ENCODE measurements at regions of chr15 and their contacts with region 1.

Region 1: DNA sequence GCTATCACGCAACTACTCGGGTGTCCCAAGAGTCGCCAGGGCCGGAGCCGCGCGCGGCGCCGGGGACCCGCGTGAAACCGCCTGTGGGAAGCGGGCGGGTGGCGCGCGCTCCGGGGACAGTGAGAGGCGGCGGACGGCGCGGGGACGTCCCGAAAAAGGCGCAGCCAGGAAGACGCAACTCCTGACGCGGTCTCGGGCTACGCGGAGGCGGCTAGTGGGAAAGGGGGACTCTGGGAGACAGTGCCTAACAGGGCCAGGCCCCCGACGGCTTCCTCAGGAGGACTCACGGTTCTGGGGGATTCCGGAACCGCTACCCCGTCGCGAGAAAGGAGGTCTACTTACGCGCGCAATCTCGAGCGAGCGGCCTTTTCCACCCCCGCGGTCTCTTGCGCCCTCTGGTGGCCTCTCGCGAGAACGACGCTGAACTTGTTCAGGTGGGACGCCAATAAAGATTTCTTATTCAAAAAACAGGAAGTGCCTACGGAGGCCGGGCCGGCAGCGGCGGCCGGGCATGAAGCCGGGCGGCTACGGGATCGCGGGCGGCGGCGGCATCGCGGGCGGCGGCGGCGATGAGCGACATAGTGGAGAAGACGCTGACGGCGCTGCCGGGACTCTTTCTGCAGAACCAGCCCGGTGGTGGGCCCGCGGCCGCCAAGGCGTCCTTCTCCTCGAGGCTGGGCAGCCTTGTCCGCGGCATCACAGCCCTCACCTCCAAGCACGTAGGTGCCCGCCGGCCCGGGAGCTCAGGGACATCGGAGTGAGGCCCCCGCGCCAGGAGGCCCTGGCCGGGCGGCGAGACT is at the start of gene AP4E1:
- DNase-seq: peak; percentile 98
- H3K4me3 Mint-ChIP-seq: peak within 1 kb of the TSS; percentile 87
- H3K27ac Mint-ChIP-seq: peak within 1 kb of the TSS; percentile 97
- H3K4me1 Mint-ChIP-seq: peaks cover 16% of the 10 kb centered on the region
- H3K27me3 Mint-ChIP-seq: no peaks in the 10 kb centered on the region
- total RNA-seq, gene AP4E1: 16.5 TPM in 2 replicates

Region 2: DNA sequence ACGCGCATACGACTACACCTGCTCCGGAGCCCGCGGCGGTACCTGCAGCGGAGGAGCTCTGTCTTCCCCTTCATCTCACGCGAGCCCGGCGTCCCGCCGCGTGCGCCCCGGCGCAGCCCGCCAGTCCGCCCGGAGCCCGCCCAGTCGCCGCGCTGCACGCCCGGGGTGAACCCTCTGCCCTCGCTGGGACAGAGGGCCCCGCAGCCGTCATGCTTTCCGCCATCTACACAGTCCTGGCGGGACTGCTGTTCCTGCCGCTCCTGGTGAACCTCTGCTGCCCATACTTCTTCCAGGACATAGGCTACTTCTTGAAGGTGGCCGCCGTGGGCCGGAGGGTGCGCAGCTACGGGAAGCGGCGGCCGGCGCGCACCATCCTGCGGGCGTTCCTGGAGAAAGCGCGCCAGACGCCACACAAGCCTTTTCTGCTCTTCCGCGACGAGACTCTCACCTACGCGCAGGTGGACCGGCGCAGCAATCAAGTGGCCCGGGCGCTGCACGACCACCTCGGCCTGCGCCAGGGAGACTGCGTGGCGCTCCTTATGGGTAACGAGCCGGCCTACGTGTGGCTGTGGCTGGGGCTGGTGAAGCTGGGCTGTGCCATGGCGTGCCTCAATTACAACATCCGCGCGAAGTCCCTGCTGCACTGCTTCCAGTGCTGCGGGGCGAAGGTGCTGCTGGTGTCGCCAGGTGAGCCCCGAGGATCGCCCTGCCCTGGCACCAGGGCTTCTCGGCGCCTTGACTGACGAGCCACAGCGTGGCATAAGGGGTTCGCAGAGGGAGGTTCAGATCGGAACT is 726.0 kb before region 1 on chr15:
- intact Hi-C with region 1: loop called (anchors 5 kb)
- DNase-seq: peak; percentile 87
- H3K4me3 Mint-ChIP-seq: peak overlapping the region; percentile 98
- H3K27ac Mint-ChIP-seq: peak overlapping the region; percentile 87
- H3K4me1 Mint-ChIP-seq: peaks cover 51% of the 10 kb centered on the region
- H3K27me3 Mint-ChIP-seq: no peaks in the 10 kb centered on the region

Region 3: DNA sequence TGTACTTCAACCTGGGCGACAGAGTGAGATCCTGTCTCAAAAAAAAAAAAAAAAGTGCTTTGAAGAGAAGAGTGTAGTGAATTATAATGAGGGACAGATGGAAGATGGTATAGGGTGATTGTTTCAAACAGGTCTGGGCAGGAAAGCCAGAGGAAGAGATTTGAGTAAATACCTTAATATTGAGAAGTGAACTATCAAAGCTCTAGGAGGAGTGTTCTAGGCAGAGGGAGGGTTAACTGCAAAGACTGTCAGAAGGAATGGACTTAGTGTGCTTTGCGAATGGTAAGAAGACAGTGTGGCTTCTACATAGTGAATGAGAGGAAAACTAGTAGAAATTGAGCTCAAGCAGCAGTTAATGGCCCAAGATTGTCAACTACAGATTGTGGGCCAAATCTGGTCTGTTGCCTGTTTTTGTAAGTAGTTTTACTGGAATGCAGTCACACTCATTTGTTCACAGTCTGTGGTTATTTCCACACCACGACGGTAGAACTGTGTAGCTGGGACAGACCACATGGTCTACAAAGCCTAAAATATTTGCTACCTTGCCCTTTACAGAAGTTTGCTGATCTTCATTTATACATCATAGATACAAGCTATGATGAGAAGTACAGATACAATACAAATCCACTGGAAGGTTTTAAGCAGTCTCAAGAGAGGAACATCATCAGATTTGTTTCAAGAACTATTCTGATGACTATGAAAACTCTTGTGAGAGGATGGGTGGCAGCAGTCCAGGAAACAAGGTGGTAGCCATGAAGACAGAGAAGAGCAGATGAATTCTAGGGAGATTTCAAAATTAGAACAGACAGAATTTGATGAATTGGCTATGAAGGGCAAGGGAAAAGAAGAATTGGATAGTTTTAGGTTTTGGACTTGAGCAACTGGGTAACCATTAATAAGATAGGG is 345.4 kb before region 1 on chr15:
- intact Hi-C with region 1: loop called (anchors 5 kb)
- DNase-seq: peak; percentile 76
- H3K4me3 Mint-ChIP-seq: peak overlapping the region; percentile 29
- H3K27ac Mint-ChIP-seq: peak overlapping the region; percentile 87
- H3K4me1 Mint-ChIP-seq: peaks cover 13% of the 10 kb centered on the region
- H3K27me3 Mint-ChIP-seq: no peaks in the 10 kb centered on the region

Region 4: GRCh38 chr15:50686468-50687301 is 221.7 kb before region 1 on chr15 and contains the start of gene TRPM7:
- intact Hi-C with region 1: loop called (anchors 1 kb)
- DNase-seq: peak; percentile 97
- H3K4me3 Mint-ChIP-seq: peak within 1 kb of the TSS; percentile 99
- H3K27ac Mint-ChIP-seq: peak within 1 kb of the TSS; percentile 99
- H3K4me1 Mint-ChIP-seq: peaks cover 41% of the 10 kb centered on the region
- H3K27me3 Mint-ChIP-seq: no peaks in the 10 kb centered on the region
- total RNA-seq, gene TRPM7: 39.4 and 41.5 TPM in 2 replicates

Region 5: DNA sequence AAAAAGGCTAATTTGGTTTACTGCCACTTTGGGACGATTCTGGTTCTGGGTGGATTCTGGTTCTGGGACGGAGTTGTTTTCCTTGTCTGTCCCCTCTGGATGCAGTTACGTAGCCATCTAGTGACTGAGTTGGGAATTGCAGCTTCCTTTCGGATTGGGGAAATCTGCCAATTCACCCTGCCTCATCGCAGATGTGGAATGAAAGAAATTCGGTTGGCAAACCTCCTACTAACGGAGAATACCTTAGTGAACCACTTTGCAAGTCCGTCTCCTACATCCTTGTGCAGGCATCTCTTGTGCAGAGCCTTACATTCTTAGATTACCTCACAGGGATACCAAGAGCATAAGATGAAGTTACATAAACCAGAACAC is 31.4 kb before region 1 on chr15:
- intact Hi-C with region 1: loop called (anchors 1 kb)
- DNase-seq: peak; percentile 93
- H3K4me3 Mint-ChIP-seq: peak overlapping the region; percentile 81
- H3K27ac Mint-ChIP-seq: peak overlapping the region; percentile 11
- H3K4me1 Mint-ChIP-seq: peaks cover 48% of the 10 kb centered on the region
- H3K27me3 Mint-ChIP-seq: peaks cover 13% of the 10 kb centered on the region

Measured in activated CD4-positive, alpha-beta T cell treated with anti-CD3 and anti-CD28 coated beads, Interleukin-2, amount 10 ng/mL, durations not matched to agents 24 days and 14 days (primary cell).